A673 (cell line): ENCODE measurements at regions of chr17 and their contacts with region 1.

Region 1: GRCh38 chr17:64428406-64428805 is 20.5 kb upstream of the MILR1 start:
- DNase-seq: no peak
- H3K4me3 ChIP-seq: no peak overlapping the region
- H3K27ac ChIP-seq: no peak overlapping the region
- H3K4me1 ChIP-seq: peaks cover 6% of the 10 kb centered on the region
- H3K27me3 ChIP-seq: no peaks in the 10 kb centered on the region
- CTCF ChIP-seq: no peak

Region 2: DNA sequence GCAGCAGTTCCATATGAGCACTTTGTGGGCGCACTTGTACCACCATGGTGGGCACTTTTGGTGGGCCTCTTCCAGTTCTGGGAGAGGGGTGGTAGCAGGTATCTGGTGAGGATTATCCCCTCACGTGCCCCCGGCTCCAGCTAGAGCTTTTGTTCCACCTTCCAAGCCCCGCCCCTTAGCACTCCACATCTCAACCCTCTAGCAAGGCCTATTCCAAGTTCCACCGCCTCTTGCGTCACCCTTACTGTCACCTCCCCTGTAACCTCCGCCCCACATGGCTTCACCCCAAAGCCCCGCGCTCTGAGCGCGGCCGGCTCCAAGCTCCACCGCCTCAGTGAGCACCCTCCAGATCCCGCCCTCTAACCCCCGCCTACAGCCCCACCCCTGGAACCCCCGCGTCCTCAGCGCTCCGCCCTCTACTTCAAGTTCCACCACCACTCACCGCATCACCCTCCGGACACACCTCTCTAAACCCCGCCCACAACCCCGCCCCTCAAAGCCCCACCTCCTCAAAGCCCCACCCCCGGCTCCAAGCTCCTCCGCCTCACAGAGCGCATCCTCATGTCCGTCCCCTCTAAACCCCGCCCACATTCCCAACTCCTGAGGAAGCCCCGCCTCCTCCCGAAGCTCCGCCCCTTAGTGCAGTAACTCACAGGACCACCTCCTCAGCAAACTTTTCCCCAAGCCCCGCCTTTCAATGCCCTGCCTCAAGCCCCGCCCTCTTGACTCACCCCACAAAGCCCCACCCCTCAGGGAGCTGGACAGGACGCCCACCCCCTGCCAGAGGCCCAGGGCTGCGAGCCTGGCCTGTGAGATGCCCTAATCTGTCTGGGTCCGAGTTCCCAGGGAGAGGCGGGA is 466.8 kb before region 1 on chr17:
- CTCF ChIA-PET with region 1: interaction called, 14 read pairs
- POLR2A ChIA-PET with region 1: no interaction called
- intact Hi-C with region 1: no loop called
- DNase-seq: peak; percentile 91
- H3K4me3 ChIP-seq: peak overlapping the region; percentile 28
- H3K27ac ChIP-seq: no peak overlapping the region
- H3K4me1 ChIP-seq: no peaks in the 10 kb centered on the region
- H3K27me3 ChIP-seq: no peaks in the 10 kb centered on the region
- CTCF ChIP-seq: no peak

Region 3: DNA sequence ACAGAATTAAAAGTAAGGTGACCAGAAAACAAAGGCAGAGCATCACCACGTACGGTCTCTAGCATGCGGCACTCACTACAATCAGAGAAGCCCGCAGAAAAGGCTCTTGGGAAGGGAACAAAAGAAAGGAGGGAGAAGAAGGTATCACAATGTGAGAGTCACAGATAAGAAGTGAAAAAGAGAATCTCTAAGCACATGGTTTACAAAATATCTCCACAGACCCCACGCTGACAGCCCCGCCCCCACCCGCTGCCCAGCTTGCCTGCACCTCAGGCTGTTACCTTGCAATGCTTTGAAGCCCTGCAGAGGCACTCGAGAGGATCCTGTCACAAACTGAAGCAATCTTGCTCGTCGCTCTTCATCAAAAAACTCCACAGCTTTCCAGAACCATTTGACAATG is 118.9 kb after region 1 on chr17:
- CTCF ChIA-PET with region 1: no interaction called
- POLR2A ChIA-PET with region 1: no interaction called
- intact Hi-C with region 1: no loop called
- DNase-seq: no peak
- H3K4me3 ChIP-seq: no peak overlapping the region
- H3K27ac ChIP-seq: no peak overlapping the region
- H3K4me1 ChIP-seq: no peaks in the 10 kb centered on the region
- H3K27me3 ChIP-seq: no peaks in the 10 kb centered on the region
- CTCF ChIP-seq: no peak